ENCODE measurements at regions of chr4 and their contacts with region 1.

Region 1: GRCh38 chr4:25986807-25987206 is 72.8 kb downstream of the SMIM20 start:
- DNase-seq: no peak
- ATAC-seq: no peak
- H3K4me3 ChIP-seq: no peak overlapping the region
- H3K4me3 Mint-ChIP-seq: no peak overlapping the region
- H3K27ac ChIP-seq: no peak overlapping the region
- H3K27ac Mint-ChIP-seq: no peak overlapping the region
- H3K4me1 ChIP-seq: no peaks in the 10 kb centered on the region
- H3K4me1 Mint-ChIP-seq: peaks cover 4% of the 10 kb centered on the region
- H3K27me3 ChIP-seq: peaks cover 0 to under 1% of the 10 kb centered on the region in 2 experiments
- H3K27me3 Mint-ChIP-seq: peaks cover 5% of the 10 kb centered on the region
- CTCF ChIP-seq: no peak

Region 2: DNA sequence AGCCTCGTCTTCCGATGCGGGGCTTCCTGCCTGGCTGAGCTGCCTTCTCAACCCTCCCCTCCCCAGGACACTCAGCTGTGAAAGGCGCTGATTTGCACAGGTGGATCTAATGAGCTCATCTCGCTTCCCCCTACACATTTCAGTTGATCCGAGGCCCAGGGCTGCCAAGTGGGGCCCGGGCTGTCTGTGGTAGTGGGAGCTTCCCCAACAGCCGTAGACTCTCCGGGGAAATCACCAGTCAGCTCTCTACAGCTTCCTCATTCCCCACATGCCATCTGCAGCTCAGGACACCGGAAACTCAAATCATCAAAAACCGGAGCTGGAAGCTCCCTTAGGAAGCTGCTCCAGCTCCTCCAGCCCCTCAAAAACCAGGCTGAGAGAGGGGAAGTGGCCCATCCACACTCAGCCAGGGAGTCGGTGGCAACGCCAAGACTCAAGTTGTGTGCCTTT is 16.6 kb before region 1 on chr4:
- CTCF ChIA-PET with region 1: interaction called, 11 read pairs
- POLR2A ChIA-PET with region 1: no interaction called
- intact Hi-C with region 1: no loop called
- DNase-seq: peak in 1 of 9 experiments; percentile 23
- ATAC-seq: no peak
- H3K4me3 ChIP-seq: no peak overlapping the region
- H3K4me3 Mint-ChIP-seq: no peak overlapping the region
- H3K27ac ChIP-seq: no peak overlapping the region
- H3K27ac Mint-ChIP-seq: no peak overlapping the region
- H3K4me1 ChIP-seq: no peaks in the 10 kb centered on the region
- H3K4me1 Mint-ChIP-seq: no peaks in the 10 kb centered on the region
- H3K27me3 ChIP-seq: no peaks in the 10 kb centered on the region
- H3K27me3 Mint-ChIP-seq: peaks cover 15% of the 10 kb centered on the region
- CTCF ChIP-seq: no peak

Region 3: GRCh38 chr4:26000274-26000950 is 13.6 kb after region 1 on chr4:
- CTCF ChIA-PET with region 1: interaction called, 23 read pairs
- POLR2A ChIA-PET with region 1: interaction called, 3 read pairs
- intact Hi-C with region 1: no loop called
- DNase-seq: no peak
- ATAC-seq: no peak
- H3K4me3 ChIP-seq: no peak overlapping the region
- H3K4me3 Mint-ChIP-seq: no peak overlapping the region
- H3K27ac ChIP-seq: no peak overlapping the region
- H3K27ac Mint-ChIP-seq: no peak overlapping the region
- H3K4me1 ChIP-seq: no peaks in the 10 kb centered on the region
- H3K4me1 Mint-ChIP-seq: no peaks in the 10 kb centered on the region
- H3K27me3 ChIP-seq: no peaks in the 10 kb centered on the region
- H3K27me3 Mint-ChIP-seq: peaks cover 3% of the 10 kb centered on the region
- CTCF ChIP-seq: no peak

Region 4: DNA sequence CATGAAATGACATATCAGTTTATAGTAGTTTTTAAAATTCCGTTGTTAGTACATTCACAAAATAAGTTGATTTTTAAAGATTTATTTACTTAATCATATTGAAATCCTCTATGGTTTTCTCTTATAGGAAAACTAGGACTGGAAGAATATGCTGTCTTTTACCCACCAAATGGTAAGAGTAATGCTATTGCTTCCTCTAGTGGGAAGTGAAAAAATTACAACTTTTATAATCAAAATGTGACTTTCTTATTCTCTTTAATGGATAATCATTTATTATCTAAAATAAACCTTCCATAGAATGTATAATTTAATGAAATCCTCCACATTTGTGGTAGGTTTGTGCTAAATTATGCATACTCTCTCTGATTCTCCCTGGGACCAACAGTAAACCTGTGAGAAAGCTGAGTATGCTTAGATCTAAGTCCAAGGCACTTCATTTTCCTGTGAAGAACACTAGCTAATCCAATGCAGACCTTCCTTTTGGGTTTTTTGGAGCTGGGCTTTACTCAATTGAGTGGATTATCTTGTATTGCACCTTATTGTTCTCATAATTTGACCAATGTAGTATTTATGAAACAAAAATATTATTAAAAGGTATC is 733.2 kb after region 1 on chr4:
- CTCF ChIA-PET with region 1: no interaction called
- POLR2A ChIA-PET with region 1: no interaction called
- intact Hi-C with region 1: loop called in 1 of 2 experiments (anchors 5 kb)
- DNase-seq: peak in 2 of 9 experiments; percentile 11 to 21
- ATAC-seq: no peak
- H3K4me3 ChIP-seq: no peak overlapping the region
- H3K4me3 Mint-ChIP-seq: no peak overlapping the region
- H3K27ac ChIP-seq: no peak overlapping the region
- H3K27ac Mint-ChIP-seq: no peak overlapping the region
- H3K4me1 ChIP-seq: peaks cover 13% of the 10 kb centered on the region
- H3K4me1 Mint-ChIP-seq: peaks cover 24% of the 10 kb centered on the region
- H3K27me3 ChIP-seq: no peaks in the 10 kb centered on the region
- H3K27me3 Mint-ChIP-seq: no peaks in the 10 kb centered on the region
- CTCF ChIP-seq: peak; percentile 50